Mammary epithelial cell (primary cell): ENCODE measurements at regions of chr3 and their contacts with region 1.

Region 1: DNA sequence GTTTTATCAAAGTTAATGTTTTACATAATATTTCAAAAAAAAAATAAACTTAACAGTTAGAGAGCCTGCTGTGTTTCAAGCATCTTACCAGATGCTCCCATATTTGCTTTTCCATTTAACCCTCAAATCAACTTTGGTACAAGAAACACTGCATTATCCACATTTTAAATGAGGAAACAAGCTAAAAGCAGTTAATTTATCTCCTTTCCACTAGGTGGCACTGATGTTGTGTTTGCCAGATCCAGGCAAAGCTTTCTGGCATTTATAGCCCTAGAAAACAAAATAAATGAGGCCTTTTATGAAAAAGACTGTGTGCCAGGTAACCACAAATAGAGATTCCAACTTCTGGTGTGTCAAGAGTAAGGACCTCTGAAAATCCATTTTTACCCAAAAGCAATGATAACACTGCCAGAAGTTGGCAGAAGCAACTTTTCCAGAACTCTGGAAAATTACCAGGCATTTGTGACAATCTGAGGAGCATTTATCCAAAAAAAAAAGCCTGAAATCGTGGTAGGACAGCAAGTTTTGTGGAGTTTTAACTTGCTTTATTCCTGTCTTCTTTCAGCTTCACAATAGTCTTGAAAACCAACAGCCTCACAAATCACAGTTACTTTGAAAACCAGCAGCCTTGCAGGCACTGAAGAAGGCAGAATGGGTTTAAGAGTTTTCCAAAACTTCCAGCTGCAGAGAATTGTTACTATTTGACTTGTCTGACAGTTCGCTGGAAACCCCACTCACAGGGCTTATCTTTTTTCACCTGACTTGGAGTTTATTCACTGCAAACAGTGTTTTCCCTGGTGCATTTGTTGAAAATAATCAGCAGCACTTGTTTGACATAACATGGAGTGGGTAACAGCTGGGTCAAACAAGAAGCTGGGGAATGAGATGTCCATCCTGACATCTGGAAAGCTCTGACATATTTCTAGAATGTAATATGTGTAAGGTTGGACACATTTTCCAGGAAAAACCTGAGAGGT is 9.2 kb downstream of the FAM162A start:
- DNase-seq: peak; percentile 32
- H3K4me3 ChIP-seq: no peak overlapping the region
- H3K27ac ChIP-seq: no peak overlapping the region
- H3K4me1 ChIP-seq: peaks cover 15% of the 10 kb centered on the region
- H3K27me3 ChIP-seq: no peaks in the 10 kb centered on the region
- CTCF ChIP-seq: peak; percentile 73 to 83

Region 2: GRCh38 chr3:122564155-122564912 is 171.2 kb after region 1 on chr3 and contains the starts of genes DTX3L and PARP9:
- CTCF ChIA-PET with region 1: no interaction called
- dilution Hi-C with region 1: no loop called
- in situ Hi-C with region 1: no loop called
- intact Hi-C with region 1: loop called (anchors 5 kb)
- DNase-seq: peak; percentile 77
- H3K4me3 ChIP-seq: peak within 1 kb of the TSS; percentile 87 to 93 (median 91)
- H3K27ac ChIP-seq: peak within 1 kb of the TSS; percentile 76
- H3K4me1 ChIP-seq: peaks cover 12% of the 10 kb centered on the region
- H3K27me3 ChIP-seq: no peaks in the 10 kb centered on the region
- CTCF ChIP-seq: no peak
- total RNA-seq, gene DTX3L: 10.7 to 15.6 TPM
- total RNA-seq, gene PARP9: 6.4 to 10.0 TPM